ENCODE measurements at regions of chr4 and their contacts with region 1.

Region 1: GRCh38 chr4:38663801-38664705 is at the start of gene KLF3:
- DNase-seq: peak in 7 of 9 donors; percentile 91 to 95 (median 93)
- ATAC-seq: peak; percentile 86
- H3K4me3 ChIP-seq: peak within 1 kb of the TSS; percentile 64
- H3K4me3 Mint-ChIP-seq: peak within 1 kb of the TSS; percentile 85 to 100 (median 99)
- H3K27ac ChIP-seq: peak within 1 kb of the TSS; percentile 98
- H3K27ac Mint-ChIP-seq: peak within 1 kb of the TSS; percentile 85 to 100 (median 95)
- H3K4me1 ChIP-seq: peaks cover 33 to 50% of the 10 kb centered on the region in 2 donors
- H3K4me1 Mint-ChIP-seq: peaks cover 40 to 57% (median 53%) of the 10 kb centered on the region in 7 donors
- H3K27me3 ChIP-seq: no peaks in the 10 kb centered on the region
- H3K27me3 Mint-ChIP-seq: peaks cover 0 to 63% (median 0%) of the 10 kb centered on the region in 5 donors
- total RNA-seq, gene KLF3: 21.0 to 142 (median 132) TPM

Region 2: DNA sequence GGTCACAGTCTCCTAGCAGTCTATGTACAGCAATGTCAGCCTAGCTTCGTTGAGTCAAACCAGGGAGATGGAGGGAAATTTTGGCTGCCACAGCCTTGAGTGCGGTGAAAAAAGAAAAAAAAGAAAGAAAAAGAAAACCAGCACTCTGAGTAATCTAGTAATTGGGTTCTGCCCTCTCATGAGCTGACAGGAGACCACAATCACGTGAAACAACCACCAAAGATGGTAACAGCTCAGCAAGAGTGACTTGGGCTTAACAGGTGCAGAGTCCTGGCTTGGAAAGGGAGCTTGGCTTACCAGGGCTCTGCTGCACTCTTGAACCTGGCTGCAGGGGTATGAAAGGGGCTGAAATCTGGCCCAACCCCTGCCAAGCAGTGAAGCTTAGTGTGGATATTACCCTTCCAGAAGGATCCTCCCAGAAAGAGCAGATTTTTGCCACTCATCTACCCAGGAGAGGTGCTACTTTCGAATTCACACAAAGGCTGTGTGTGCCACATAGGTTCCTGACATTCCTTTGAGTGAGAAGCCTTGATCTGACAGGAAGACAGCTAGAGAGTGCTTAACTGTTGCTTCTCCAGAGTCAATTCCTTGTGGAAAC is 353.5 kb before region 1 on chr4:
- CTCF ChIA-PET with region 1: no interaction called
- POLR2A ChIA-PET with region 1: interaction called, 14 read pairs
- intact Hi-C with region 1: no loop called
- DNase-seq: peak in 8 of 9 donors; percentile 70 to 84 (median 79)
- ATAC-seq: peak; percentile 96
- H3K4me3 ChIP-seq: peak overlapping the region; percentile 12
- H3K4me3 Mint-ChIP-seq: peak overlapping the region; percentile 37 to 80 (median 70)
- H3K27ac ChIP-seq: peak overlapping the region; percentile 44
- H3K27ac Mint-ChIP-seq: peak overlapping the region; percentile 65 to 96 (median 85)
- H3K4me1 ChIP-seq: peaks cover 29 to 34% of the 10 kb centered on the region in 2 donors
- H3K4me1 Mint-ChIP-seq: peaks cover 24 to 70% (median 60%) of the 10 kb centered on the region in 7 donors
- H3K27me3 ChIP-seq: no peaks in the 10 kb centered on the region
- H3K27me3 Mint-ChIP-seq: peaks cover 0 to 45% (median 0%) of the 10 kb centered on the region in 5 donors

Region 3: DNA sequence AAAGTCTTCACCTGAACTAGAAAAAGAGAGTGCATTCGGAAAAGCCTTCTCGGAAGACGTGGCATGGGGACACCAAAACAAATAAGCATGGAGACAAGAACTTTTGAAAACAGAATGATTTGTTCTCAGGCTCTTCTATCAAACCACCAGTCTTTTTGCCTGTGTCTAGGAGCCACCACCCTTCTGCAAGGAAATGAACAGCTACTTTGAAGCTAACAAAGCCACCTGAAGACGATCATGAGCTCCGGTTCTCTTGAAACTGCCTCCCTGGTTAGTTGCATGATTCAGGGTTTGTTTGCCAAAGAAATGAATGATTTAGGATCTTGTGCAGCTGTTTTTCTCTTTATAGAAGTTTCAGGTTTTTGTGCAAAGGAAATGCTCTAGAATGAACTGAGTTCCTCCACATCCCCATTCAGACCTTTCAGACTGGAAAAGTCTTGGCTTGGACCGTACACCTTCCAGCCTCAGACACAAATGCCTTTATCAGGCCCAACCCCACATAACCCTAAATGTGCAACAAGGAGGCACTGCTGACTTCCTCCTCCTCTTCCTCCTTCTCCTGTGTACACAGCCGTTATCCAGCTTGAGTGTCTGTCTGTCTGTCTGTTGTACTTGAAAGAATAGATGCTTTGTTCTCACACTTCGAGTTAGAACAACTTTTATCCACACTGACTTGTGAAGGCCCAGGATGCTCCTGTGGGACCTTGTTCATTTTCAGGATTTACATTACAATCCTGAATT is 334.9 kb before region 1 on chr4:
- CTCF ChIA-PET with region 1: interaction called, 5 read pairs
- POLR2A ChIA-PET with region 1: interaction called, 59 read pairs
- intact Hi-C with region 1: no loop called
- DNase-seq: peak in 7 of 9 donors; percentile 57 to 87 (median 77)
- ATAC-seq: peak; percentile 87
- H3K4me3 ChIP-seq: no peak overlapping the region
- H3K4me3 Mint-ChIP-seq: peak overlapping the region; percentile 14 to 83 (median 73)
- H3K27ac ChIP-seq: peak overlapping the region; percentile 68
- H3K27ac Mint-ChIP-seq: peak overlapping the region; percentile 43 to 98 (median 92)
- H3K4me1 ChIP-seq: peaks cover 0 to 69% of the 10 kb centered on the region in 2 donors
- H3K4me1 Mint-ChIP-seq: peaks cover 30 to 95% (median 74%) of the 10 kb centered on the region in 7 donors
- H3K27me3 ChIP-seq: no peaks in the 10 kb centered on the region
- H3K27me3 Mint-ChIP-seq: peaks cover 0 to 31% (median 0%) of the 10 kb centered on the region in 5 donors

Region 4: GRCh38 chr4:38529189-38530115 is 134.6 kb before region 1 on chr4:
- CTCF ChIA-PET with region 1: interaction called, 3 read pairs
- POLR2A ChIA-PET with region 1: interaction called, 11 read pairs
- intact Hi-C with region 1: loop called in 1 of 2 experiments (anchors 5 kb)
- DNase-seq: peak in 8 of 9 donors; percentile 25 to 57 (median 34)
- ATAC-seq: peak; percentile 88
- H3K4me3 ChIP-seq: no peak overlapping the region
- H3K4me3 Mint-ChIP-seq: peak overlapping the region; percentile 22 to 80 (median 58)
- H3K27ac ChIP-seq: peak overlapping the region; percentile 30
- H3K27ac Mint-ChIP-seq: peak overlapping the region; percentile 80 to 96 (median 90)
- H3K4me1 ChIP-seq: peaks cover 18 to 22% of the 10 kb centered on the region in 2 donors
- H3K4me1 Mint-ChIP-seq: peaks cover 21 to 43% (median 35%) of the 10 kb centered on the region in 7 donors
- H3K27me3 ChIP-seq: no peaks in the 10 kb centered on the region
- H3K27me3 Mint-ChIP-seq: peaks cover 0 to 34% (median 0%) of the 10 kb centered on the region in 5 donors

Region 5: GRCh38 chr4:38625508-38625907 is 38.5 kb before region 1 on chr4:
- CTCF ChIA-PET with region 1: interaction called, 3 read pairs
- POLR2A ChIA-PET with region 1: interaction called, 4 read pairs
- intact Hi-C with region 1: loop called in 1 of 2 experiments (anchors 2 kb)
- DNase-seq: peak in 7 of 9 donors; percentile 26 to 59 (median 33)
- ATAC-seq: peak; percentile 67
- H3K4me3 ChIP-seq: no peak overlapping the region
- H3K4me3 Mint-ChIP-seq: peak overlapping the region in 8 of 10 donors; percentile 9 to 57 (median 39)
- H3K27ac ChIP-seq: no peak overlapping the region
- H3K27ac Mint-ChIP-seq: peak overlapping the region in 7 of 9 donors; percentile 53 to 81 (median 70)
- H3K4me1 ChIP-seq: peaks cover 0 to 9% of the 10 kb centered on the region in 2 donors
- H3K4me1 Mint-ChIP-seq: peaks cover 8 to 27% (median 21%) of the 10 kb centered on the region in 7 donors
- H3K27me3 ChIP-seq: no peaks in the 10 kb centered on the region
- H3K27me3 Mint-ChIP-seq: peaks cover 0 to 4% (median 0%) of the 10 kb centered on the region in 5 donors

Region 6: GRCh38 chr4:38768968-38769394 is 104.9 kb after region 1 on chr4:
- CTCF ChIA-PET with region 1: no interaction called
- POLR2A ChIA-PET with region 1: no interaction called
- intact Hi-C with region 1: no loop called
- DNase-seq: no peak
- ATAC-seq: peak; percentile 66
- H3K4me3 ChIP-seq: no peak overlapping the region
- H3K4me3 Mint-ChIP-seq: no peak overlapping the region
- H3K27ac ChIP-seq: no peak overlapping the region
- H3K27ac Mint-ChIP-seq: no peak overlapping the region
- H3K4me1 ChIP-seq: no peaks in the 10 kb centered on the region
- H3K4me1 Mint-ChIP-seq: peaks cover 0 to 4% (median 0%) of the 10 kb centered on the region in 7 donors
- H3K27me3 ChIP-seq: no peaks in the 10 kb centered on the region
- H3K27me3 Mint-ChIP-seq: peaks cover 0 to 28% (median 0%) of the 10 kb centered on the region in 5 donors

Region 7: DNA sequence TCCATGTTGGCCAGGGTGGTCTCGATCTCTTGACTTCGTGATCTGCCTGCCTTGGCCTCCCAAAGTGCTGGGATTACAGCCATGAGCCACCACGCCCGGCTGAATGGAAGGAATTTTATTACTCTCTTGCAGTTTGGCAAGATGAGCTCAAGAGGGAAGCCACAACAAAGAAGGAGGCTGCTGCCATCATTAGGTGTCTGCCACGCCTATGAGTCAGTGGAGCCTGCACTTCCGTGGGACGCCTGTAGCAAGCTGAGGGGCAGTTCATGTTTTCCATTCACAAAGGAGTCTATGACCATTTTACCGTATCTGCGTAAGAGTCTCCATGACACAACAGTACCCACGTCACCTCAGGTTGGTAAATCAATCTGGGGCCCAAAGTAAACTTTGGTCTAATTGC is 1619.9 kb after region 1 on chr4:
- CTCF ChIA-PET with region 1: no interaction called
- POLR2A ChIA-PET with region 1: no interaction called
- intact Hi-C with region 1: no loop called
- DNase-seq: peak in 8 of 9 donors; percentile 60 to 93 (median 81)
- ATAC-seq: peak; percentile 98
- H3K4me3 ChIP-seq: peak overlapping the region; percentile 18
- H3K4me3 Mint-ChIP-seq: peak overlapping the region; percentile 57 to 81 (median 72)
- H3K27ac ChIP-seq: peak overlapping the region; percentile 70
- H3K27ac Mint-ChIP-seq: peak overlapping the region in 8 of 9 donors; percentile 89 to 99 (median 96)
- H3K4me1 ChIP-seq: peaks cover 38 to 40% of the 10 kb centered on the region in 2 donors
- H3K4me1 Mint-ChIP-seq: peaks cover 30 to 85% (median 80%) of the 10 kb centered on the region in 7 donors
- H3K27me3 ChIP-seq: no peaks in the 10 kb centered on the region
- H3K27me3 Mint-ChIP-seq: no peaks in the 10 kb centered on the region

Measured in naive thymus-derived CD4-positive, alpha-beta T cell (primary cell).